ENCODE measurements at regions of chr14 and their contacts with region 1.

Region 1: GRCh38 chr14:66070509-66071319 is 415.5 kb upstream of the CCDC196 start:
- DNase-seq: peak; percentile 82
- ATAC-seq: peak; percentile 77
- H3K4me3 Mint-ChIP-seq: no peak overlapping the region
- H3K27ac Mint-ChIP-seq: no peak overlapping the region
- H3K4me1 Mint-ChIP-seq: peaks cover 13% of the 10 kb centered on the region
- H3K27me3 Mint-ChIP-seq: peaks cover 6% of the 10 kb centered on the region

Region 2: GRCh38 chr14:65933400-65934084 is 137.2 kb before region 1 on chr14:
- CTCF ChIA-PET with region 1: no interaction called
- POLR2A ChIA-PET with region 1: no interaction called
- DNase-seq: no peak
- ATAC-seq: no peak
- H3K4me3 Mint-ChIP-seq: no peak overlapping the region
- H3K27ac Mint-ChIP-seq: no peak overlapping the region
- H3K4me1 Mint-ChIP-seq: peaks cover 65% of the 10 kb centered on the region
- H3K27me3 Mint-ChIP-seq: no peaks in the 10 kb centered on the region

Region 3: DNA sequence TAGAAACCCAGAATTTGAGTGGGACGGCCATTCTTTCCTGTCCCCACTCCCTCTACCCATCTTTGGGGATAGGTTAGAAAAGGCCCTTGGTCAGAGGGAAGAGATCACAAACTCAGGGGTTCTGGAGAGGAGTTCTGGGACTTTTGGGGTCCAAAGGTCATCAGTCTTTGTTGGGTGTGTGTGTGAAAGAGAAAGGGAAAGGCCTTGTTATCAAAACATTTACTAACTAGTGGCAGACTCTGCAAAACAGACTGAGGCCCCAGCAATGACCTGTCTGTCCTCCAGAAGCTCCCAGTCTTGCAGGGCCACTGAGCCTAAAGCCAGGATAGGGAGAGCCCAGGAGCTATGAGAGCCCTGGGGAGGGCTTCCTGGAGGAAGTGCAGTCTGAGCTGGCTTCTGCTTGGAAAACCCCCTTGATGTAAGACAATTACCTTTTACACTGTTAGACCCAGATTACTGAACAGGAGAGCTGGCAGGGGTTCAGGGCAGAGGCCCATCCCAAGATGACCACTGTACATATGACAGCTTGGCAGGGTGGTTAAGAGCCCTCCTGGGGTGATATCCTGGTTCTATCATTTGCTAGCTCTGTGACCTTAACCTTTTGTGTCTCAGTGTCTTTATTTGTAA is 13.7 kb before region 1 on chr14:
- CTCF ChIA-PET with region 1: interaction called, 28 read pairs
- POLR2A ChIA-PET with region 1: no interaction called
- DNase-seq: no peak
- ATAC-seq: no peak
- H3K4me3 Mint-ChIP-seq: no peak overlapping the region
- H3K27ac Mint-ChIP-seq: no peak overlapping the region
- H3K4me1 Mint-ChIP-seq: no peaks in the 10 kb centered on the region
- H3K27me3 Mint-ChIP-seq: peaks cover 3% of the 10 kb centered on the region

Measured in activated CD8-positive, alpha-beta T cell treated with anti-CD3 and anti-CD28 coated beads, Interleukin-2, amount 10 ng/mL, durations not matched to agents 7 days and 5 days (primary cell).